OCI-LY7 (cell line): ENCODE measurements at regions of chr1 and their contacts with region 1.

Region 1: DNA sequence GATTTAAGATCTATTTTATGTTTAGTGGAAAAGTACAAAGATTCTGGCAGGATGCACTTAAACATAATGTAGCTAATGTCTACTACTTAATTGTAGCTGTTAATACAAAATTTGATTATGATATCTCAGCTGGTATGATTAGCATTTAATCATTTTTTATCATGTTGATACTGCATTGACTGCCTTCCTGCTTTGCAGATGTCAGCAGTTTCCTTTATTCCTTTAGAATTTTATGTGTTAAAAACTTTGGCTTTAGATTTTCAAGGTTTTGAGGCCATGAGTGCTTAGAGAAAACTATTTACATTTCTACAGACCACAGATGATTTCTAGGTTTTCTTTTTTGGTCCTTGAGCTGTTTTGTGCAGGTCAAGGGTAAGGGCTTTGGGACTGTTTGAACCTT is 152.2 kb downstream of the ZNF326 start:
- DNase-seq: no peak
- H3K4me3 ChIP-seq: no peak overlapping the region
- H3K27ac ChIP-seq: no peak overlapping the region
- H3K4me1 ChIP-seq: no peaks in the 10 kb centered on the region
- CTCF ChIP-seq: no peak

Region 2: GRCh38 chr1:90201467-90202358 is 54.6 kb after region 1 on chr1:
- CTCF ChIA-PET with region 1: no interaction called
- POLR2A ChIA-PET with region 1: no interaction called
- intact Hi-C with region 1: loop called (anchors 1 kb)
- DNase-seq: no peak
- H3K4me3 ChIP-seq: no peak overlapping the region
- H3K27ac ChIP-seq: no peak overlapping the region
- H3K4me1 ChIP-seq: no peaks in the 10 kb centered on the region
- CTCF ChIP-seq: no peak

Region 3: DNA sequence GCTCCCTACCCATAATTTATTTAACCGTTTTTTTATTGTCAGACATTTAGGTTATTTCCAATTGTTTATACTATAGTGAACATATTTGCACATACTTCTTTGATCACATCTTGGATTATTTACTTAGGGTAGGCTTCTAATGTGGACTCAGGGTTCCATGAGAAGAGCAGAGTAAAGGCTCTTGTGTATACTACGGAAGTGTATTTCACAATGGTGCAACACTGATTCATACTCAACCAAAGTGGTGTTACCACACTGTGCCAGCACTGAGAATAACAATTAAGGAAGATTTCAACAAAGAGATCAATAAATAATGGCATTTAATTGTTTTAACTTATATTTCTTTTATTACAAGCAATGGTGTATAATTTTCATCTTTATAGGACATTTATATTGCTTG is 99.0 kb after region 1 on chr1:
- CTCF ChIA-PET with region 1: no interaction called
- POLR2A ChIA-PET with region 1: no interaction called
- intact Hi-C with region 1: no loop called
- DNase-seq: no peak
- H3K4me3 ChIP-seq: no peak overlapping the region
- H3K27ac ChIP-seq: no peak overlapping the region
- H3K4me1 ChIP-seq: no peaks in the 10 kb centered on the region
- CTCF ChIP-seq: no peak